PC-9 (cell line): ENCODE measurements at regions of chr11 and their contacts with region 1.

Region 1: DNA sequence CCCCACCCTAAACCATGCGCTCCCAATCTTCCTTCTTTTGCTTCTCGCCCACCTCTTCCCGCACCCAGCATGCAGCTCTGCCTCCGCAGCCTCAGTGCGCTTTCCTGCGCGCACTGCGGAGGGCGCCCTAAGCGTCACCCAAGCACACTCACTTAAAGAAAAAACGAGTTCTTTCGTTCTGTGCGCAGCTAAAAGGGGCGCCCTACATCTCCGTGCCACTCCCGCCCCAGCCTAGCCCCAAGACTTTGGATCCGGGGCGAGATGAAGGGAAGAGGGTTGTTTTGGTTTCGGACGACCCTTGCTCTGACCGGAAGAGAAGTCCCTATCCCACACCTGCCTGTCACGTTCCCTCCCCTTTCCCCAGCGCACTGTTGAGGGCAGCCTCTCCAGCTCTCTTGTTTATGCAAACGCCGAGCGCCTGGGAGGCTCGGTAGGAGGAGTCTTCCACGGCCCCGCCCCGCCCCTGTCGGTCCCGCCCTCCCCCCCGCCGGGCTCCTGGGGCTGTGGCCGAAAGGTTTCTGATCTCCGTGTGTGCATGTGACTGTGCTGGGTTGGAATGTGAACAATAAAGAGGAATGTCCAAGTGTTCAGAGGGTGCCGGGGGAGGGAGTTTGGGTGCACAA is 5.3 kb downstream of the VSIG2 start:
- DNase-seq: peak; percentile 84 to 92
- H3K4me3 ChIP-seq: peak overlapping the region; percentile 67
- H3K27ac ChIP-seq: peak overlapping the region; percentile 90
- H3K4me1 ChIP-seq: peaks cover 45% of the 10 kb centered on the region
- H3K27me3 ChIP-seq: no peaks in the 10 kb centered on the region
- CTCF ChIP-seq: peak; percentile 75

Region 2: GRCh38 chr11:124793466-124794278 is 46.9 kb after region 1 on chr11:
- CTCF ChIA-PET with region 1: interaction called, 10 read pairs
- POLR2A ChIA-PET with region 1: no interaction called
- intact Hi-C with region 1: loop called (anchors 10 kb)
- DNase-seq: peak; percentile 31 to 67
- H3K4me3 ChIP-seq: no peak overlapping the region
- H3K27ac ChIP-seq: no peak overlapping the region
- H3K4me1 ChIP-seq: peaks cover 33% of the 10 kb centered on the region
- H3K27me3 ChIP-seq: no peaks in the 10 kb centered on the region
- CTCF ChIP-seq: peak; percentile 81

Region 3: DNA sequence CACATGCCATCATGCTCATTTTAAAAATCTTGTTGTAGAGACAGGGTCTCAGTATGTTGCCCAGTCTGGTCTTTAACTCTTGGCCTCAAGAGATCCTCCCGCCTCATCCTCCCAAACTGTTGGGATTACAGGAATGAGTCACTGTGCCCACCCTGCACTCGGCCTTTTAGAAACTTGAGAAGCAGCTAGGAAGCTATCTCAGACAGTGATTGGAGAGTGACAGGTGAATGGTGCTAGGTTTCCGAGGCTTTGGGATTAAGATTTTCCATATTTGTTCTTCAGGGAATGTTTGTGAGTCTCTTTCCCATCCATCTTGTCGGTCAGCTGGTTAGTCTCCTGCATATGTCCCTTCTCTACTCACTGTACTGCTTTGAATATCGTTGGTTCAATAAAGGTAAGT is 833.1 kb after region 1 on chr11:
- CTCF ChIA-PET with region 1: no interaction called
- POLR2A ChIA-PET with region 1: interaction called, 17 read pairs
- intact Hi-C with region 1: no loop called
- DNase-seq: no peak
- H3K4me3 ChIP-seq: no peak overlapping the region
- H3K27ac ChIP-seq: no peak overlapping the region
- H3K4me1 ChIP-seq: no peaks in the 10 kb centered on the region
- H3K27me3 ChIP-seq: no peaks in the 10 kb centered on the region
- CTCF ChIP-seq: no peak